Mammary epithelial cell (primary cell): ENCODE measurements at regions of chr11 and their contacts with region 1.

Region 1: GRCh38 chr11:125941619-125942611 is 3.9 kb upstream of the VSIG10L2 start:
- DNase-seq: peak; percentile 17
- H3K4me3 ChIP-seq: no peak overlapping the region
- H3K27ac ChIP-seq: no peak overlapping the region
- H3K4me1 ChIP-seq: no peaks in the 10 kb centered on the region
- H3K27me3 ChIP-seq: peaks cover 1% of the 10 kb centered on the region
- CTCF ChIP-seq: peak; percentile 80 to 87

Region 2: GRCh38 chr11:125923012-125923579 is 18.8 kb before region 1 on chr11:
- CTCF ChIA-PET with region 1: no interaction called
- dilution Hi-C with region 1: no loop called
- in situ Hi-C with region 1: no loop called
- intact Hi-C with region 1: loop called (anchors 2 kb)
- DNase-seq: peak; percentile 50
- H3K4me3 ChIP-seq: no peak overlapping the region
- H3K27ac ChIP-seq: no peak overlapping the region
- H3K4me1 ChIP-seq: no peaks in the 10 kb centered on the region
- H3K27me3 ChIP-seq: peaks cover 3% of the 10 kb centered on the region
- CTCF ChIP-seq: peak; percentile 88 to 93

Region 3: GRCh38 chr11:125978778-125979407 is 37.0 kb after region 1 on chr11:
- CTCF ChIA-PET with region 1: no interaction called
- dilution Hi-C with region 1: loop called (anchors 5 kb)
- in situ Hi-C with region 1: no loop called
- intact Hi-C with region 1: no loop called
- DNase-seq: no peak
- H3K4me3 ChIP-seq: no peak overlapping the region
- H3K27ac ChIP-seq: no peak overlapping the region
- H3K4me1 ChIP-seq: peaks cover 11% of the 10 kb centered on the region
- H3K27me3 ChIP-seq: peaks cover 2% of the 10 kb centered on the region
- CTCF ChIP-seq: no peak

Region 4: GRCh38 chr11:126007238-126007637 is 65.3 kb after region 1 on chr11:
- CTCF ChIA-PET with region 1: no interaction called
- dilution Hi-C with region 1: no loop called
- in situ Hi-C with region 1: no loop called
- intact Hi-C with region 1: loop called (anchors 5 kb)
- DNase-seq: peak; percentile 55
- H3K4me3 ChIP-seq: no peak overlapping the region
- H3K27ac ChIP-seq: no peak overlapping the region
- H3K4me1 ChIP-seq: no peaks in the 10 kb centered on the region
- H3K27me3 ChIP-seq: no peaks in the 10 kb centered on the region
- CTCF ChIP-seq: no peak

Region 5: DNA sequence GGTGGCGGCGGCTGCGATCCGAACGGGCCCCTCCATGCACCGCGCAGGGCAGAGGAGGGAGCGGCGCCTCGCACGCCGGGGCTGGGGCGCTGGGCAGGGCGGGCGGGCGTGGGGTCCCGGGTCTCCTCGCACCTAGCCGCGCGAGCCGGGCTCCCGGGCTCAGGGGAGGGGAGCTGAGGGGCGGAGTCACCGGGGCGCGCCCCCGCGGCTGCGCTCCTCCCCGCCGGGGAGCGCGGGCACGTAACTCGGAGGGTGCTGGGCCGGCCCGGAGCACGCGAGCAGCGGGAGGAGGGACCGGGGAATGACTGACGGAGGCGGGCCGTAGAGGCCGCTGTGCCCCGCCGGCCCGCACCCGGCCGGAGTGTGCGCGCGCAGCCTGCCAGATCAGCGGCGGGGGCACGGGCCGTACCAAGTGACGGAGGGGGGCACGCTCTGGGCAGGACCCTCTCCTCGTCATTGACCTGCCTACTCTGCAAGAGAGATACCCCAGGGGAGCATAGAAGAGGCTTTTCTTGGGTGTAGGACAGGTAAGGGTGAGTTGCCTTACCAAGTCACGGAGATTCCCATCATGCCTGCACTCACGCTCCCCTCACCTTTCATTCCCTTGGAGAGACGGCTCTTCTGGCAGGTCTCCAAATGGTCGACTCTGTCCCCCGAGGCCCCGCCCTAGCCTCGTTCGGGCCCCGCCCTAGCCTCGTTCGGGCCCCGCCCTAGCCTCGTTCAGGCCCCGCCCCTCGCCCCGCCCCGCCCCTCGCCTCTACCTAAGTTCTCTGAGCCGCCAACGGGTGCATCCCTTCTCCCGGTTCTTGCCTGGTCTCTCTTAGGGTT is 121.0 kb after region 1 on chr11 and contains the start of gene CDON:
- CTCF ChIA-PET with region 1: interaction called, 11 read pairs
- dilution Hi-C with region 1: no loop called
- in situ Hi-C with region 1: loop called in 1 of 2 experiments (anchors 25 kb)
- intact Hi-C with region 1: loop called (anchors 1 kb)
- DNase-seq: peak; percentile 86
- H3K4me3 ChIP-seq: peak within 1 kb of the TSS; percentile 56 to 67 (median 60)
- H3K27ac ChIP-seq: peak within 1 kb of the TSS; percentile 95
- H3K4me1 ChIP-seq: peaks cover 4% of the 10 kb centered on the region
- H3K27me3 ChIP-seq: no peaks in the 10 kb centered on the region
- CTCF ChIP-seq: peak in 1 of 2 donors; percentile 10
- total RNA-seq, gene CDON: 1.9 to 3.8 TPM

Region 6: DNA sequence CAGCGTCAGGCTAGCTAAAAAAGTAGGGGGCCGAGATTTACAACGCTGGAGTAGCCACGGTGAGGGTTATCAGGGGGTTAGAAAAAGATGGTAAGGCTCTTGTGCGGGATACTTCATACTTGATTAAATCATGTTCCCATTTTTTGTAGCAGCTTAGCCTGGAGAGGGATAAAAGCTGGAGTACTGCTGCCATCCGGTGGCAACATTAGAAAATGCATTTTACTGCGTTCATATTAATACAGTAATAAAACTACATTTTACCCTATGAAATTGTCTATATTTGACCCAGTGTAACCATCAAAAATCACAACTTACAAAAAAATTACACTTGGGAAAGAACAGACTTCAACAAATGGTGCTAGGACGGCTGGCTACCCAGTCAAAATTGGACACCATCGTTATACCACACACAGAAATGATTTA is 252.2 kb after region 1 on chr11:
- CTCF ChIA-PET with region 1: interaction called, 7 read pairs
- dilution Hi-C with region 1: no loop called
- in situ Hi-C with region 1: no loop called
- intact Hi-C with region 1: loop called (anchors 1 kb)
- DNase-seq: peak; percentile 16
- H3K4me3 ChIP-seq: no peak overlapping the region
- H3K27ac ChIP-seq: no peak overlapping the region
- H3K4me1 ChIP-seq: no peaks in the 10 kb centered on the region
- H3K27me3 ChIP-seq: no peaks in the 10 kb centered on the region
- CTCF ChIP-seq: peak; percentile 67 to 70